ENCODE measurements at regions of chr6 and their contacts with region 1.

Region 1: DNA sequence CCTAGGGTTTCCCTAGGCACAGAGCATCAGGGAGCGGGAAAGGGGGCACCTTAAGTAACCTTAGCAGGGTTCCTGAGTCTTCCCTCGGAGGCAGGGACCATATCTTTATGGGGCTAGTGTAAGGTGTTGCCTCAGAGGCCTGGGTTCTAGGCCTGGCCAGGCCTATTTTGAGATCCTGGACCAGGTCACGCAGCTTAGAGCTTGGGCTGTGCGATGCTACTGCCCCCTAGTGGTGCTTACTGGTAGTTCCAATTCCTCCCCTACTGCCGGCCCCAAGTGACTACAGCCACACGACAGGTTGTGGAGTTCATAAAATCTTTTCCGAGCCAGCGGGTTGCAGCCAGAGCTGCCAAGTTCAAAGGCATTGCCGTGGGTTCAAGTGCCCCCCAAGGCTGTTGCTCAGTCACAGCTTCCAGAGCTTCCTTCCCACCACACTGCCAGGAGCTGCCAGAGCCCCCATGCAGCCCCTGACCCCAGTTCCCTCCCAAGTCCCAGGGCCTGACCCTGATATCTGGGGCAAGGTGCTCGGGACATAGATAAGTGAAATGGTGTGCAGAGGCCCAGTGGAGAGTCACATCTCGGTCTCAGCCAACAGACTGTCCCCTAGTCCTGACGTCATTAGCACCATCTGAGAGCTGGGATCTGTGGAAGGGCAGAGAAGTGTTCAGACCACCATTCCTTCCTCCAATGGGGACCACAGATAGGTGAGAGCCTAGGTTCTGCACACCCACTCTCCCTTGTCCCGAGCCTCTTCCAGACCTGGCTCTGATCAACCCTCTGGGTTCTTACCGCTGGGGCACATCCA is 3.3 kb downstream of the LRRC73 start:
- DNase-seq: peak; percentile 80
- H3K4me3 Mint-ChIP-seq: no peak overlapping the region
- H3K27ac Mint-ChIP-seq: no peak overlapping the region
- H3K4me1 Mint-ChIP-seq: peaks cover 11% of the 10 kb centered on the region
- H3K27me3 Mint-ChIP-seq: no peaks in the 10 kb centered on the region
- CTCF ChIP-seq: peak; percentile 94

Region 2: DNA sequence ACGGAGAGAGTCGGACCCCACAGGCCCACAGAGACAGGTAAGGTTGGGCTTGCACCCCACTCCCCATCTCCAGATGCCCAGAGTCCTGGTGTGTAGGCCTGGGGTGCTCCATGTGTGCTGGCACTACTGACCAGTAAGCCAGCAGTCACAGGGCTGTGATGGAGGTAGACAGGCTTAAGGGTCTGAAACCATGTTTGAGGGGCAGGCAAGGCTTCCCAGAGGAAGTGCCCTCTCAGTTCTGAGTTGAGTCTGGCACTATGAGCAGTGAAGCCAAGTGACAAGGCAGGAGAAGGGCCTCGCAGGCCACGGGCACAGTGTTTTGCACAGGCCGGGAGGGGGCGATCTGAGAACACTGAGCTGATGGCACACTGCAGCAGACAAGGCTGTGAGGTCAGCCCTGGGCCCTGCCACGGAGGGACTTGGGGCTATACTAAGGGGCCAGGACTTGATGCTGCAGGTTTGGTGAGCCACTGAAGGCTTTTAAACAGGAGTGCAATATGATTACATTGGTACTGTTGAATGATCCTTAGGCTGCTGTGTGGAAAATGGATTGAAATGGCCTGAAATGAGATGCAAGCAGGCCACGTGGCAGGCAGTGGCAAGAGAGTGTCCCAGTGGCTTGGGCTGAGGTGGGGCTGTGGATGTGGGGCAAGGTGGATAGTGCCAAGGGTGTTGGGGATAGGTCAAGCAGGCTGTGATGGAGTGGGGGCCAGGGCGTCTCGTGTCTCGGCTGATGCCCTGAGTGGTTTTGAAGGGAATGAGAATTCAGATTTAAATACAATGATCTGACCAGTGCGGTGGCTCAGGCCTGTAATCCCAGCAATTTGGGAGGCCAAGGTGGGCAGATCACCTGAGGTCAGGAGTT is 243.3 kb before region 1 on chr6:
- CTCF ChIA-PET with region 1: interaction called, 8 read pairs
- POLR2A ChIA-PET with region 1: no interaction called
- intact Hi-C with region 1: loop called (anchors 1 kb)
- DNase-seq: peak; percentile 77
- H3K4me3 Mint-ChIP-seq: no peak overlapping the region
- H3K27ac Mint-ChIP-seq: no peak overlapping the region
- H3K4me1 Mint-ChIP-seq: peaks cover 4% of the 10 kb centered on the region
- H3K27me3 Mint-ChIP-seq: peaks cover 10% of the 10 kb centered on the region
- CTCF ChIP-seq: peak; percentile 77

Region 3: GRCh38 chr6:43386492-43386891 is 120.4 kb before region 1 on chr6:
- CTCF ChIA-PET with region 1: interaction called, 14 read pairs
- POLR2A ChIA-PET with region 1: interaction called, 3 read pairs
- intact Hi-C with region 1: loop called (anchors 1 kb)
- DNase-seq: peak; percentile 29
- H3K4me3 Mint-ChIP-seq: no peak overlapping the region
- H3K27ac Mint-ChIP-seq: no peak overlapping the region
- H3K4me1 Mint-ChIP-seq: peaks cover 13% of the 10 kb centered on the region
- H3K27me3 Mint-ChIP-seq: no peaks in the 10 kb centered on the region
- CTCF ChIP-seq: peak; percentile 35

Region 4: DNA sequence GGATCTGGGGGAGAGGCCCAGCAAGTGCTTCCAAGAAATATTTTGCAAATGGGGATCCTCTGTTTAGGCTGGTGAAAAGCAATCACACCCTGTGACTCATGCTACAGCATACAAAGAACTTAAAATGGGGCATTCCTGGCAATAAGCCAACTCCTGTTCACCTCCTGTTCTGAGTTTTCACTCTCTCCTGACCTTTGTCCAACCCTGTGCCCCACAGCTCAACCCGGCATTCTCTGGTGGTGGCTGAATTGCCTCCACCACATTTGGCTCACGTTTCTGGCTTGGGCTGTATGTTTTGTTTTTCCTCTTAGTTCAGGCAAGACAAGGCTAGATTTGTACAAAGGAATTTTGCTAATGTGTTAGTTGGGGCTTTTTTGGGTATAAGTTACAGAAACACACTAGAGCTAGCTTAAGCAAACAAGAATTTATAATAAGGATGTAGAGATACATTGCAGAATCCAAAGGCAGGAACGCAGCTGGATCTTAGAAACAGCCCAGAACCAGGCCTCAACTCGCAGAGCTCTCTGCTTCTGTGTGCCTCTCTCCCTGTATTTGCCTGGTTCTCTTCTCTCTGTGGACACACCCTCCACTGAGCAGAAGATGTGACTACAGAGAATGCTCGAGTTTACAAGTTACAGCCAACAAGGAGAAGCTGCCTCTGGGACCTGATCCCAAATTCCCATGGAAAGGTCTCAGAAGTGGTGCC is 70.1 kb before region 1 on chr6:
- CTCF ChIA-PET with region 1: interaction called, 30 read pairs
- POLR2A ChIA-PET with region 1: interaction called, 4 read pairs
- intact Hi-C with region 1: no loop called
- DNase-seq: peak; percentile 95
- H3K4me3 Mint-ChIP-seq: peak overlapping the region; percentile 5
- H3K27ac Mint-ChIP-seq: peak overlapping the region; percentile 92
- H3K4me1 Mint-ChIP-seq: peaks cover 32% of the 10 kb centered on the region
- H3K27me3 Mint-ChIP-seq: no peaks in the 10 kb centered on the region
- CTCF ChIP-seq: no peak

Region 5: GRCh38 chr6:43454696-43455530 is 52.0 kb before region 1 on chr6:
- CTCF ChIA-PET with region 1: interaction called, 47 read pairs
- POLR2A ChIA-PET with region 1: interaction called, 17 read pairs
- intact Hi-C with region 1: loop called (anchors 1 kb)
- DNase-seq: peak; percentile 78
- H3K4me3 Mint-ChIP-seq: peak overlapping the region; percentile 83
- H3K27ac Mint-ChIP-seq: peak overlapping the region; percentile 27
- H3K4me1 Mint-ChIP-seq: peaks cover 15% of the 10 kb centered on the region
- H3K27me3 Mint-ChIP-seq: no peaks in the 10 kb centered on the region
- CTCF ChIP-seq: no peak

Region 6: GRCh38 chr6:43477235-43478007 is 29.4 kb before region 1 on chr6 and contains the start of gene TJAP1:
- CTCF ChIA-PET with region 1: interaction called, 13 read pairs
- POLR2A ChIA-PET with region 1: interaction called, 7 read pairs
- intact Hi-C with region 1: no loop called
- DNase-seq: peak; percentile 88
- H3K4me3 Mint-ChIP-seq: peak within 1 kb of the TSS; percentile 86
- H3K27ac Mint-ChIP-seq: peak within 1 kb of the TSS; percentile 97
- H3K4me1 Mint-ChIP-seq: peaks cover 26% of the 10 kb centered on the region
- H3K27me3 Mint-ChIP-seq: no peaks in the 10 kb centered on the region
- CTCF ChIP-seq: no peak
- total RNA-seq, gene TJAP1: 70.9 and 78.9 TPM in 2 replicates

Region 7: DNA sequence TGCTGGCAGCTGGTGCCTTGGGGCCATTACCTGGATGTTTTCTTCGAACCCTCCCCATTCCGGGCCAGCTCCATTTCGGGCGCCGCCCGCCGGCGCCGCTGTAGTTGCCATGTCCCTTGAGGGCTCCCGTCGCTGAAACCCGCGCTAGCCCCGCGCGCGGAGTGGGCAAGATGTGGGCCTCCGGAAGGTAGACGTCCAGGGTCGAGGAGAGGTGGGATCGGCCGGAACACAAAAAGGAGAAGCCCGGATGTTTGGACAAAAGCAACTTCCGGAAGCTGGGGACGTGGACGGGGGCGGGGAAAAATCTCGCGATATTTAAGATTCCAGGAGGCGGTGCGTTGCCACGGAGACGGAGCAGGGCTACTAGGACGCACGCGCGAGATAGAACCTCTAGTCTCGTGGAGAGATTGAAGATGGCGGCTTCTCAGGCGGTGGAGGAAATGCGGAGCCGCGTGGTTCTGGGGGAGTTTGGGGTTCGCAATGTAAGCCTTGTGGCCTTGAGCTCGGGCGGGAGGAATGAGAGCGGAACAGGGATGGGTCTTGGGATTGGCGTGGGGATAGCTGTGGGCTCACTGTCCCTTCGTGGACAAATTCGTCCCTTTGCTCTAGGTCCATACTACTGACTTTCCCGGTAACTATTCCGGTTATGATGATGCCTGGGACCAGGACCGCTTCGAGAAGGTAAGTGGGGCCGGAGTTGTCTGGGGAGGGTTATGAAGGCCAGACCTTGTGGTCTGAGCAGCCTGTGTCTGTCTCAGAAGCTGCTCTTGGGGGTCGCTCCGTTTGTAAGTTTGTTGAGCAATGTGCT is 10.0 kb after region 1 on chr6 and contains the starts of genes POLR1C and YIPF3:
- CTCF ChIA-PET with region 1: interaction called, 8 read pairs
- POLR2A ChIA-PET with region 1: interaction called, 22 read pairs
- intact Hi-C with region 1: no loop called
- DNase-seq: peak; percentile 98
- H3K4me3 Mint-ChIP-seq: no peak within 1 kb of the TSS
- H3K27ac Mint-ChIP-seq: no peak within 1 kb of the TSS
- H3K4me1 Mint-ChIP-seq: peaks cover 13% of the 10 kb centered on the region
- H3K27me3 Mint-ChIP-seq: no peaks in the 10 kb centered on the region
- CTCF ChIP-seq: no peak
- total RNA-seq, gene POLR1C: 54.9 and 63.6 TPM in 2 replicates
- total RNA-seq, gene YIPF3: 65.1 and 72.9 TPM in 2 replicates